AG04450 (cell line): ENCODE measurements at regions of chr7 and their contacts with region 1.

Region 1: DNA sequence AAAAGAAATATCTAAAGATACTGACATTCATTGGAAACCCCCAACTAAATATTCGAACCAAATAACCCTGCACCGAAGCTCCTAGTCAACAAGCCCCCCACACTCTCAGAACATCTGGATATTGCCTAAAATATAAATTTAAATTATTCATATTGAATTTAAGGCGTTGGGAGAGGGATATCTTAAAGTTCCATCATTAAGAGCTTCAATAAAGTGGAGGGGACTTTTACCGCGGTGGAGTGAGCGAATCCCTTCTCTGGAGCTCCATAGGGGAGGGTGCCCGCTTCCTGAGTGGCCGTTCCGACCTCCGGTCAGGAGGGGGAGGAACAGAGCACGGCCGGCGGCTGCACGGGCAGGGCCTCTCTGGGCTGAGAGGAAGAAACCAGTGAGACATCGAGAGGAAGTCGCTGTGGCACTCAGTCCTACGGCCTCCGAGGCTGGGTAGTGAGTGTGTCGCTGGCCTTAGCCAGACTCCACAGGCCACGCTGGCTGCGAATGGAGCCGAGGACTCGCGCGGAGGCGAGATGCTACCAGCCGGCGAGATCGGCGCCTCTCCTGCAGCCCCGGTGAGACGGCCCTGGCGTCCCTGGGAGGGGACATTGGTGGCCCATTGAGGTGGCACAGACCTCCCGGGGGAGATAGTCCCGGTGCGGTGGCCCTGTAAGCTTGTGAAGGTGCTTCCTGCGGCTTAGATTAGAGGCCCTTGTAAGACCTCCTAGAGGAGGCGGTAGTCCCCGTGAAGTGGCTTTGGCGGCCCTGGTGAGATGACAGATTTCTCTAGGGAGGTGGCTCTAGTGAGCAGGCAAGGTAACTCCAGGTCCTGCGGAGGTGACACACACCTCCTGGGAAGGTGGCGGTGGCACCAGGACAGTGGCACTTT is at the start of gene RINT1:
- DNase-seq: peak; percentile 72
- H3K4me3 ChIP-seq: peak within 1 kb of the TSS; percentile 98
- H3K27ac ChIP-seq: peak within 1 kb of the TSS; percentile 39
- H3K27me3 ChIP-seq: no peaks in the 10 kb centered on the region
- CTCF ChIP-seq: peak; percentile 83
- polyA plus RNA-seq, gene RINT1: 21.6 and 27.6 TPM in 2 replicates

Region 2: GRCh38 chr7:105173586-105173985 is 358.4 kb before region 1 on chr7:
- CTCF ChIA-PET with region 1: no interaction called
- POLR2A ChIA-PET with region 1: no interaction called
- DNase-seq: no peak
- H3K4me3 ChIP-seq: no peak overlapping the region
- H3K27ac ChIP-seq: no peak overlapping the region
- H3K27me3 ChIP-seq: no peaks in the 10 kb centered on the region
- CTCF ChIP-seq: no peak

Region 3: GRCh38 chr7:105496521-105496920 is 35.5 kb before region 1 on chr7:
- CTCF ChIA-PET with region 1: interaction called, 13 read pairs
- POLR2A ChIA-PET with region 1: interaction called, 7 read pairs
- DNase-seq: no peak
- H3K4me3 ChIP-seq: no peak overlapping the region
- H3K27ac ChIP-seq: no peak overlapping the region
- H3K27me3 ChIP-seq: no peaks in the 10 kb centered on the region
- CTCF ChIP-seq: no peak

Region 4: GRCh38 chr7:105512415-105512814 is 19.6 kb before region 1 on chr7:
- CTCF ChIA-PET with region 1: interaction called, 18 read pairs
- POLR2A ChIA-PET with region 1: no interaction called
- DNase-seq: no peak
- H3K4me3 ChIP-seq: no peak overlapping the region
- H3K27ac ChIP-seq: no peak overlapping the region
- H3K27me3 ChIP-seq: no peaks in the 10 kb centered on the region
- CTCF ChIP-seq: no peak

Region 5: GRCh38 chr7:105565190-105565589 is 33.2 kb after region 1 on chr7:
- CTCF ChIA-PET with region 1: interaction called, 13 read pairs
- POLR2A ChIA-PET with region 1: no interaction called
- DNase-seq: no peak
- H3K4me3 ChIP-seq: no peak overlapping the region
- H3K27ac ChIP-seq: no peak overlapping the region
- H3K27me3 ChIP-seq: no peaks in the 10 kb centered on the region
- CTCF ChIP-seq: no peak